ENCODE measurements at regions of chr10 and their contacts with region 1.

Region 1: DNA sequence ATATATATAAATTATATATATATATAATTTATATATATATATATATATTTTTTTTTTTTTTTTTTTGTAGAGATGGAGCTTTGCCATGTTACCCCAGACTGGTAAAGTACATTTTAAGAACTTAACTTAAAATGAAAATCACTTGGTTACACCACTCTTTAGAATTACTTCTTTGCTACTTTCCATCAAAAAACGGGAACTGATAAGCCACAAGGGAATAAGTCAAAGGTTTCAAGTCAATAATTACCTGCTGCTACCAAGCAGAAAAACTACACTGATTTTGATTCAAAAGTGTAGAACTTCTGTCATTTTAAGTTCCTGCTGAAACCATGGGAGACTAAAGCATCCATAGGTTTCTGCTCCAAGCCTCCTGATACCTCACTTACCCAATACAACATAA is 12.2 kb downstream of the PPA1 start:
- DNase-seq: no peak
- ATAC-seq: no peak

Region 2: GRCh38 chr10:70363971-70364771 is 143.1 kb after region 1 on chr10:
- intact Hi-C with region 1: loop called (anchors 2 kb)
- DNase-seq: peak; percentile 94
- ATAC-seq: peak; percentile 98

Region 3: GRCh38 chr10:70379581-70380176 is 158.6 kb after region 1 on chr10:
- intact Hi-C with region 1: loop called (anchors 5 kb)
- DNase-seq: no peak
- ATAC-seq: no peak

Measured in Right ventricle myocardium superior (tissue), 1 donor.